Vagina (tissue), 2 donors: ENCODE measurements at regions of chr5 and their contacts with region 1.

Region 1: GRCh38 chr5:147628058-147628895 is 118.4 kb upstream of the DPYSL3 start:
- DNase-seq: no peak
- H3K4me3 ChIP-seq: no peak overlapping the region
- H3K27ac ChIP-seq: no peak overlapping the region
- H3K4me1 ChIP-seq: no peaks in the 10 kb centered on the region
- H3K27me3 ChIP-seq: no peaks in the 10 kb centered on the region
- CTCF ChIP-seq: peak in 1 of 3 experiments; percentile 38
- POLR2A ChIP-seq: no peak

Region 2: DNA sequence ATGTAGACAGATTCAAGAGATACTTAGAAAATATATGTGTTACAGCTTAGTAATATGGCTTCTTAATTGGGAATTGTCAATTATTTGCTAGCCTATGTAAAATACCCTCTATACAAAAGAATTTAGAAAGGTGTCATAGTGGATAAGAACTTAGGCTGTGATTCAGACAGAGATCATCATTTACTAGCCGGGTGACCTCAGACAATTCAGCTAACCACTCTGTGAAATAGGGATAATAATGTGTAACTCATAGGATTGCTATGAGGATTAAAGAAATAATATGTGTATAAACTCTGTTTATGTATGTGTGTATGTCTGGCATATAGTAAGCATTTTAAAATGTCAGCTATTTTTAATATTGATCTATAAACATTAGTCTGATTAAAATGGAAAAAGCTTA is 1439.9 kb before region 1 on chr5:
- intact Hi-C with region 1: no loop called
- DNase-seq: no peak
- H3K4me3 ChIP-seq: no peak overlapping the region
- H3K27ac ChIP-seq: no peak overlapping the region
- H3K4me1 ChIP-seq: peaks cover 2% of the 10 kb centered on the region
- H3K27me3 ChIP-seq: no peaks in the 10 kb centered on the region
- CTCF ChIP-seq: no peak
- POLR2A ChIP-seq: no peak

Region 3: GRCh38 chr5:147822686-147823491 is 194.6 kb after region 1 on chr5:
- intact Hi-C with region 1: loop called (anchors 10 kb)
- DNase-seq: no peak
- H3K4me3 ChIP-seq: no peak overlapping the region
- H3K27ac ChIP-seq: no peak overlapping the region
- H3K4me1 ChIP-seq: no peaks in the 10 kb centered on the region
- H3K27me3 ChIP-seq: no peaks in the 10 kb centered on the region
- CTCF ChIP-seq: peak; percentile 2 to 72 (median 56)
- POLR2A ChIP-seq: no peak